Cardiac septum (tissue), 1 donor: ENCODE measurements at regions of chr2 and their contacts with region 1.

Region 1: GRCh38 chr2:96739633-96740428 is at the start of gene LMAN2L:
- DNase-seq: peak; percentile 97
- total RNA-seq, gene LMAN2L: 17.0 TPM

Region 2: DNA sequence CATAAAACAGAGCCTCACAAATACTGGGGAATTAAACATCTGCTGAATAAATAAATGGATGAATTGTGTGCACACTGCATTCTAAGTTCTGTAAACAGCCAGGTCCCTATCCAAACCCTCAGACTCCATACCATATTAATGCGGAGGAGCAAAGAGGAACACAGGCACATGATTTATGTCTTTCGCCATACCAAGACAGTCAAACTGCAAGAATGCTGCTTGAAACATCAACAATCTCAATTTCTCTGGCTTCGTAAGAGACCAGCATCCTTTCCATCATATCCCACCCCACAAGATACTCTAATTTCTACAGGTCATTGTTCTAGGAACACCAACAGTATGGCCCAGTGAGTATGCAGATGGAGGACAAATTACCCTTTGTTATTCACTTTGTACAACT is 116.7 kb before region 1 on chr2:
- intact Hi-C with region 1: loop called (anchors 5 kb)
- DNase-seq: no peak

Region 3: DNA sequence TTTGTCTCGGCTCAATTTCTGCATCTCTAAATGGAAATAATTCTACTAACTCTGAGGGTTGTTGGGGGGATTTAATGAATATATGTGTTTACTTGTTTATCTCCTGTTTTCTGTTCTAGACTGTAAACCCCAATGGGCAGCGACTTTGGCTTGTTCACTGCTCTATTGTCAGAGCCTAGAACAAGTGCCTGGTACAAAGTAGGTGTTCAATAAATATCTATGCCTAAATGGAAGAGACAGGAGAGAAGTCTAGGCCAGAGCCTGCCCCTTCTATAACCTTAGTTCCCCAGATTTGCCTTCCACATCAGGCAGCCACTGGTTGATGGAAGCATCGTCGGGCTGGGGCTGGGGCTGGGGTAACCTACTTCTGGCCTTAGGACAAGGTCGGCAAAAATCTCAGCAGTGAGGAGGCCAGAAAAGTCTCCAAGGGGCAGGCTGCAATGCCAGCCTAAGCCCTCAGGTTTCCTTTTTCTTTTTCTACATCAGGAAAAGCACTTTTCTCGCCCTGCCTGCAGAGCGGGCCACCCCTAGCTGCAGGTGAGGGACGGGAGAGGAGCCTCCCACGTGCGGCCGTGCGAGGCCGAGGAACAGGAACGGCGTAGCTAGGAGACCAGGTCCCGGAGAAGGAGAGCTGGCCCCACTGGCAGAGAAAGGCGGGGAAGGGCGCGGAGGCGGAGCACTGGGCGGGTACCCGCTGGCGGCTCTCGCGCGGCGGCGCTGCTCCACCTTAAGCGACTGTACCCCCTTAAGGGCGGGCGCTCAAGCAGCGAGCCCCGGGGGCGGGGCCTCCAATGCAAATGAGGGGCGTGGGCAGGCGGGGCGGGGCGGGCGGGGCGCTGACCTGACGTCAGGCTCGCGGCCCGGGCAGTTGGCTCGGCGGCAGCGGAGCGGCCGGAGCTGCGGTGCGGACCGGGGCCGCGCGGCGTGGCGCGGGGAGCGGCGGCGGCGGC is 20.5 kb after region 1 on chr2 and contains the start of gene CNNM4:
- intact Hi-C with region 1: loop called (anchors 1 kb)
- DNase-seq: peak; percentile 97
- total RNA-seq, gene CNNM4: 36.8 TPM

Region 4: DNA sequence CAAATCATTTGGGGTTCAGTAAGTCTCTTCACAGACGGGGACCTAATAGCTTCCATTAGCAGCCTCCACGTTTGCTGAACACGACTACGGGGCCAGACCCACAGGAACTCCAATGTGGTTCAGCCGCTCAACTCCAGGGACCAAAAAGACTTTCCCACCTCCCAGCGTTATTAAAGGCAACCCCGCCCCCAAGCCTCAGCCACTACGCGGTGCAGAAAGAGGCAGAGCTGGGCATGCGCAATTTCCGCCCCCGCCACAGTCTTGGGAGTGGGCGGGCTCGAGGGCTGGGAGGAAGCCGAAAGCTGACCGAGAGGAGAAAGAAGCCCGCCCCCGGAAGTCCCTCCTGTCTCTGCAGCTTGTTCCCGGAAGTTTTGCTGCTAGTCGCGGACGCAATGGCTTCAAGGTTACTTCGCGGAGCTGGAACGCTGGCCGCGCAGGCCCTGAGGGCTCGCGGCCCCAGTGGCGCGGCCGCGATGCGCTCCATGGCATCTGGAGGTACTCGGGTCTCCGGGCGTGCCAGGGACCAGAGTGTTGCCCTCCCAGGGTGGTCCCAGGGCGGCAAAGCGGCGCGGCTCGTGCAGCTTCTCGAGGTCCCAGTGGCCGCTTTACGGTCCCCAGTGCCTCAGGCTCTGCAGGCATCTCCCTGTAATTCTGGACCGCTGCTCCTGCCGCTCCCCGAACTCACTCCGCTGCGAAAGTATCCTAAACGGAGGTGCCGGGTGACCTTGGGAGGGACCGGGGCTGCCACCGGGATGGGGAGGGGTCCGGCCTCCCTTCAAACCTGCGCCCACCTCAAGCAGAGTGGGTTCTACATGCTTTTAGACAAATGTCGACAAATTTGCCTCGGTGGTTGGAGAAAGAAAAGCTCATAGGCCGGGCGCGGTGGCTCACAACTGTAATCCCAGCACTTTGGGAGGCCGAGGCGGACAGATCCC is 906.1 kb after region 1 on chr2 and contains the start of gene COX5B:
- intact Hi-C with region 1: no loop called
- DNase-seq: peak; percentile 100
- total RNA-seq, gene COX5B: 992 TPM